HEK293 (cell line): ENCODE measurements at regions of chr16 and their contacts with region 1.

Region 1: DNA sequence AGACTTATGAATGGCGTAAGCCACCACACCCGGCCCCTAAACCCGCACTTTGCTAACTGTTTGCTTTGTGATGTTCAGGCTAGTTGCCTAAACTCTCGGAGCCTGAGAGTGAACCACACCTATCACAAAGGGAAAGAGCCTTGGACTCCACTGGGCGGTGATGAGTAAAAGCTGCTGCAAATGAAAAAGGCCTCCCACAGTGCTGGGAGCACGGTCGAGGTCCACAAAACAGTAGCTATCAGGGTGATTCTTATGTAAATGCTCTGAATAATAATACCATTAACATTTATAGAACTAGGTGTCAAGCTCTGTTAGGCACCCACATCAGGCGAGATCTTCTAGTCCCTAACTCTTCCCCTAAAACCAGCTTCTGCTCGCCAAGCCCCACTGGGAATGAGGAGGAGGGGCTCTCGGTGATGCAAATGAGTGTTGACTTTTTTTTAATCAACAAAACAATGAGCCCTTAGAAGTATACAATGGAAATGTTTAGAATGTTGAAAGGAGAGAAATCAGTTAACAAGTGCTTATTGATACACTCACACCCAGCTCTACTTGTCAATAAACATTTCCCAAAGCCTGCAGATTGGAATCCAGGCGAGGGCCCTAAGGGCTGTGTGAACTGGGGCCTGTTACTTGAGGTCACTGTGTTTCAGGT is 19.8 kb downstream of the FBRS start:
- H3K4me3 ChIP-seq: no peak overlapping the region
- H3K27ac ChIP-seq: no peak overlapping the region
- H3K4me1 ChIP-seq: no peaks in the 10 kb centered on the region
- CTCF ChIP-seq: no peak

Region 2: GRCh38 chr16:30724641-30725417 is 46.8 kb after region 1 on chr16:
- CTCF ChIA-PET with region 1: no interaction called
- POLR2A ChIA-PET with region 1: interaction called, 10 read pairs
- H3K4me3 ChIP-seq: no peak overlapping the region
- H3K27ac ChIP-seq: no peak overlapping the region
- H3K4me1 ChIP-seq: no peaks in the 10 kb centered on the region
- CTCF ChIP-seq: no peak